CD8-positive, alpha-beta T cell (primary cell): ENCODE measurements at regions of chr3 and their contacts with region 1.

Region 1: GRCh38 chr3:104796556-104796955 is 570.2 kb upstream of the ALCAM start:
- DNase-seq: no peak
- ATAC-seq: no peak
- H3K4me3 ChIP-seq: no peak overlapping the region
- H3K4me3 Mint-ChIP-seq: no peak overlapping the region
- H3K27ac ChIP-seq: no peak overlapping the region
- H3K27ac Mint-ChIP-seq: no peak overlapping the region
- H3K4me1 ChIP-seq: no peaks in the 10 kb centered on the region
- H3K4me1 Mint-ChIP-seq: no peaks in the 10 kb centered on the region
- H3K27me3 ChIP-seq: no peaks in the 10 kb centered on the region
- H3K27me3 Mint-ChIP-seq: no peaks in the 10 kb centered on the region
- CTCF ChIP-seq: no peak

Region 2: GRCh38 chr3:104738271-104738670 is 58.3 kb before region 1 on chr3:
- CTCF ChIA-PET with region 1: no interaction called
- POLR2A ChIA-PET with region 1: no interaction called
- intact Hi-C with region 1: no loop called
- DNase-seq: no peak
- ATAC-seq: no peak
- H3K4me3 ChIP-seq: no peak overlapping the region
- H3K4me3 Mint-ChIP-seq: no peak overlapping the region
- H3K27ac ChIP-seq: no peak overlapping the region
- H3K27ac Mint-ChIP-seq: no peak overlapping the region
- H3K4me1 ChIP-seq: no peaks in the 10 kb centered on the region
- H3K4me1 Mint-ChIP-seq: no peaks in the 10 kb centered on the region
- H3K27me3 ChIP-seq: no peaks in the 10 kb centered on the region
- H3K27me3 Mint-ChIP-seq: no peaks in the 10 kb centered on the region
- CTCF ChIP-seq: no peak

Region 3: DNA sequence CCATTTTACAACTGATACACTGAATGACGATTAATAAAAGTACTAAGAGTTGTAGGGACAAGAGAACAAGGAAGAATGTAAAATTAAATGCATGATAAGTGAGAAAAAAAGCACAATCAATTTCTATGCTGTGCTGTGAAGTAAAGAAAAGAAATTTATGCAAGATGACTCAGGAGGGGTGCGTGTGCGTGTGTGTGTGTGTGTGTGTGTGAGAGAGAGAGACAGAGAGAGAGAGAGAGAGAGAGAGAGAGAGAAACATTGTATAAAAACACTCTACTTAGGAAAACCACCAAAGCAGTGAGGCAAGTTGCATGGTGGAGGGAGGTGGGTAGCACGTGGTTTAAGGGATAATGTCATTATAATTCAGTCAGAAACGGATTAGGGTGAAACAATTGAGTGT is 10.6 kb before region 1 on chr3:
- CTCF ChIA-PET with region 1: no interaction called
- POLR2A ChIA-PET with region 1: no interaction called
- intact Hi-C with region 1: no loop called
- DNase-seq: no peak
- ATAC-seq: no peak
- H3K4me3 ChIP-seq: no peak overlapping the region
- H3K4me3 Mint-ChIP-seq: no peak overlapping the region
- H3K27ac ChIP-seq: no peak overlapping the region
- H3K27ac Mint-ChIP-seq: no peak overlapping the region
- H3K4me1 ChIP-seq: no peaks in the 10 kb centered on the region
- H3K4me1 Mint-ChIP-seq: no peaks in the 10 kb centered on the region
- H3K27me3 ChIP-seq: no peaks in the 10 kb centered on the region
- H3K27me3 Mint-ChIP-seq: no peaks in the 10 kb centered on the region
- CTCF ChIP-seq: no peak

Region 4: DNA sequence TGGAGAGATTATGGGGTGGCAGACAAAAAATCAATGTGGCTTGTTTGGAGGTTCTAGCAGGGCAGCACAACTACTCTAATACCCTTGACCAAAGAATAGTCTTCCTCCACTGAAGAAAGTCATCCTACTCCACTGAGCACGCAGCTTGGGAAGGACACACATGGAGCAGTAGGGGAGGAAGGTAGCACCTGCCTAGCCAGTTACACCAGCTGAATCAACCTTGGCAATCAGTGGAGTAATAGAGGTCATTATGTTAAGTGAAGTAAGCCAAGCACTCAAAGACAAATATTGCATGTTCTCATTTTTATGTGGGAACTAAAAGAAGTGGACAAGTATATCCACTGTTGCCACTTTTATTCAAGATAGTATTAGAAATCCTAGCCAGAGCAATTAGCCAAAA is 14.3 kb after region 1 on chr3:
- CTCF ChIA-PET with region 1: no interaction called
- POLR2A ChIA-PET with region 1: no interaction called
- intact Hi-C with region 1: loop called in 1 of 2 experiments (anchors 1 kb)
- DNase-seq: no peak
- ATAC-seq: no peak
- H3K4me3 ChIP-seq: no peak overlapping the region
- H3K4me3 Mint-ChIP-seq: no peak overlapping the region
- H3K27ac ChIP-seq: no peak overlapping the region
- H3K27ac Mint-ChIP-seq: no peak overlapping the region
- H3K4me1 ChIP-seq: no peaks in the 10 kb centered on the region
- H3K4me1 Mint-ChIP-seq: no peaks in the 10 kb centered on the region
- H3K27me3 ChIP-seq: no peaks in the 10 kb centered on the region
- H3K27me3 Mint-ChIP-seq: no peaks in the 10 kb centered on the region
- CTCF ChIP-seq: no peak